Ascending aorta (tissue), 2 donors: ENCODE measurements at regions of chr10 and their contacts with region 1.

Region 1: GRCh38 chr10:102641880-102642735 is 2.2 kb upstream of the TRIM8 start:
- DNase-seq: peak; percentile 96 to 99
- H3K4me3 ChIP-seq: peak overlapping the region; percentile 97
- H3K27ac ChIP-seq: peak overlapping the region; percentile 98
- H3K4me1 ChIP-seq: peaks cover 6 to 8% of the 10 kb centered on the region in 2 donors
- H3K27me3 ChIP-seq: no peaks in the 10 kb centered on the region
- CTCF ChIP-seq: no peak

Region 2: DNA sequence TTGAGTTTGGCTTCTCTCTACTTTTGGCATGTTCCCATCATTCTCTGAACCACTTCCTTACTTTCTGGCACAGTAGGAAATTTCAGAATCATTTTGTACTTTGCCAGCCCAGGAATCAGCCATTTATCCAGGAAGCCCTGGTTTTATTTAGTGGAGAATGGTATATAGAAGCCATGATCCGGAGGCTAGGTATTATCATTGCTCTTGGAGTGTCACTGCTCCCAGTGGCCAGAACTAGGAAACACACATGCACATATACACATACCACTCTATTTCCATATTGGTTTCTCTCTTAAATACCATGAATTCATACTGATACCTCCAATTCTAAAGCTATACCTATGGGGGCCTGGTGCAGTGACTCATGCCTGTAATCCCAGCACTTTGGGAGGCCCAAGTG is 102.1 kb before region 1 on chr10:
- intact Hi-C with region 1: no loop called
- DNase-seq: no peak
- H3K4me3 ChIP-seq: no peak overlapping the region
- H3K27ac ChIP-seq: no peak overlapping the region
- H3K4me1 ChIP-seq: no peaks in the 10 kb centered on the region
- H3K27me3 ChIP-seq: no peaks in the 10 kb centered on the region
- CTCF ChIP-seq: peak in 2 of 3 experiments; percentile 17 to 29

Region 3: GRCh38 chr10:102604379-102604960 is 37.6 kb before region 1 on chr10:
- intact Hi-C with region 1: loop called (anchors 2 kb)
- DNase-seq: no peak
- H3K4me3 ChIP-seq: no peak overlapping the region
- H3K27ac ChIP-seq: peak overlapping the region; percentile 84 to 87
- H3K4me1 ChIP-seq: peaks cover 13 to 27% of the 10 kb centered on the region in 2 donors
- H3K27me3 ChIP-seq: no peaks in the 10 kb centered on the region
- CTCF ChIP-seq: no peak

Region 4: GRCh38 chr10:102673819-102674511 is 31.9 kb after region 1 on chr10:
- intact Hi-C with region 1: loop called (anchors 2 kb)
- DNase-seq: peak; percentile 31 to 86
- H3K4me3 ChIP-seq: peak overlapping the region; percentile 5 to 47
- H3K27ac ChIP-seq: peak overlapping the region; percentile 77 to 78
- H3K4me1 ChIP-seq: peaks cover 15 to 33% of the 10 kb centered on the region in 2 donors
- H3K27me3 ChIP-seq: no peaks in the 10 kb centered on the region
- CTCF ChIP-seq: no peak

Region 5: GRCh38 chr10:102713814-102714620 is 71.9 kb after region 1 on chr10 and contains the start of gene ARL3:
- intact Hi-C with region 1: loop called (anchors 2 kb)
- DNase-seq: peak; percentile 94 to 98
- H3K4me3 ChIP-seq: peak within 1 kb of the TSS; percentile 84 to 91
- H3K27ac ChIP-seq: peak within 1 kb of the TSS; percentile 79 to 83
- H3K4me1 ChIP-seq: peaks cover 0 to 13% of the 10 kb centered on the region in 2 donors
- H3K27me3 ChIP-seq: no peaks in the 10 kb centered on the region
- CTCF ChIP-seq: peak; percentile 21 to 42 (median 39)
- total RNA-seq, gene ARL3: 2.0 TPM

Region 6: GRCh38 chr10:102782673-102783551 is 140.8 kb after region 1 on chr10:
- intact Hi-C with region 1: loop called (anchors 10 kb)
- DNase-seq: peak; percentile 62 to 95
- H3K4me3 ChIP-seq: peak overlapping the region; percentile 28 to 35
- H3K27ac ChIP-seq: peak overlapping the region; percentile 94 to 95
- H3K4me1 ChIP-seq: peaks cover 39 to 86% of the 10 kb centered on the region in 2 donors
- H3K27me3 ChIP-seq: no peaks in the 10 kb centered on the region
- CTCF ChIP-seq: no peak

Region 7: DNA sequence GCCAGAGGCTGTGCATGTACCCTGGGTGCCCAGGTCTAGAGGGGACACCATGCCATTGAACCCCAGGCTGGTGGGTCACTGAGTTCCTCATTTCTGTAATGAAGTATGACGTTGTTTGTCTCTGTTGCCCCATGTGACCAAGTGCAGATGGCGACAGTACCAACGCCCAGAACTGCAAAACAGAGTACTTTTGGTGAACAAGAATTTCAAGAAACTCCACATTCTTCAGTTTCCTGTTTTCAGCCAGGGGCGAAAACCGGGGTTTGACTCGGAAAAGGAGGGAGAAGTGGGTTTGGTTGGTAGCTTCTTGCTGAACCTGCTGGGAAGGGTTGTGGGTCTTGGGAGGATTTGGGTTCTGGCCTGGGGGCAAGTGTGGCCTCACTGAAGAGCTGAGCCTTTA is 177.0 kb after region 1 on chr10:
- intact Hi-C with region 1: no loop called
- DNase-seq: peak; percentile 53 to 79
- H3K4me3 ChIP-seq: no peak overlapping the region
- H3K27ac ChIP-seq: peak overlapping the region; percentile 95 to 99
- H3K4me1 ChIP-seq: peaks cover 23 to 30% of the 10 kb centered on the region in 2 donors
- H3K27me3 ChIP-seq: no peaks in the 10 kb centered on the region
- CTCF ChIP-seq: no peak